A673 (cell line): ENCODE measurements at regions of chr7 and their contacts with region 1.

Region 1: DNA sequence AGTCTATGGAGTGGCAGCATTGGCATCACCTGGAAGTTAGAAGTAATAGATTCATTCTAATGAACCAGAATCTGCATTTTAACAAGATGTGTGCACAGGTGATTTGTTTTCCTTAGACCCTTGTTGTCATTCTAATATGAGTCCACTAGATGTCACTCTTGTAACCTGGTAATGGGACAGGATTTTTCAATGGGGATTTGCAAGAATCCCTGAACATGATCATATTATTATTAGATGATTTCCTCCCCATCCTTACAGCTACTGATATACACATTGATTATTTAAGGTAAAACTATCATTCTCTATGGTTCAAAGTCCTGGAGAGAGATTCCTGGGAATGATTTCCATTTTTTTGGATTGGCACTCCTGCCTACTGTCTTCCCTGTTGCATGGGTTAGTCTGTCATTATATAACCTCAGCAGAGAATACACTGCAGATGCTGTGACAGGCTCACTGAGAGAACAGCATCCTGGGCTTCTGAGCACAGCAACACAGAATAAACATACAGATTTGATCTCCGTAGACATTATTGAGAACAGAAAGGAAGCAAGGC is 194.9 kb downstream of the SUGCT start:
- DNase-seq: peak; percentile 58
- H3K4me3 ChIP-seq: no peak overlapping the region
- H3K27ac ChIP-seq: no peak overlapping the region
- H3K4me1 ChIP-seq: no peaks in the 10 kb centered on the region
- H3K27me3 ChIP-seq: no peaks in the 10 kb centered on the region
- CTCF ChIP-seq: peak; percentile 75

Region 2: DNA sequence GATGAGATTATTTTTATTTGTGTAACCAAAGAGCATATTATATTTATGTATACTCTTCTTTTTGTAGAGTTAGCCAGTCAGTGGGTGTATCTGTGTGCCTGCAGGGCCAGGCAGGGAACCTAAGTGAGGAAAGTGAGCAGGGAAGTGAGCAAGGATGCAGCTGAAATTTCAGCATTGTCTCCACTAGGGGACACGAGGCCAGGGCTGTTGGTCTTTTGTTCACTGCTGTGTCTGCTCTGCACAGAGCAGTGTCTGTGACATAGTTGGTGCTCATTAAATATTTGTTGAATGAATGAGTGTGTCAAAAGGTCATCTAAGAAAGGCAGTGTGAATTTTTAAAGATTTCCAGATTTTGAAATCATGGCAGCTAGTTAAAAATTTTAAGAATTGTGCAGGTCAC is 143.1 kb before region 1 on chr7:
- CTCF ChIA-PET with region 1: no interaction called
- POLR2A ChIA-PET with region 1: no interaction called
- intact Hi-C with region 1: no loop called
- DNase-seq: no peak
- H3K4me3 ChIP-seq: no peak overlapping the region
- H3K27ac ChIP-seq: no peak overlapping the region
- H3K4me1 ChIP-seq: no peaks in the 10 kb centered on the region
- H3K27me3 ChIP-seq: no peaks in the 10 kb centered on the region
- CTCF ChIP-seq: 0 out of 2 replicates have a peak, but pooled peaks have one; percentile 18

Region 3: DNA sequence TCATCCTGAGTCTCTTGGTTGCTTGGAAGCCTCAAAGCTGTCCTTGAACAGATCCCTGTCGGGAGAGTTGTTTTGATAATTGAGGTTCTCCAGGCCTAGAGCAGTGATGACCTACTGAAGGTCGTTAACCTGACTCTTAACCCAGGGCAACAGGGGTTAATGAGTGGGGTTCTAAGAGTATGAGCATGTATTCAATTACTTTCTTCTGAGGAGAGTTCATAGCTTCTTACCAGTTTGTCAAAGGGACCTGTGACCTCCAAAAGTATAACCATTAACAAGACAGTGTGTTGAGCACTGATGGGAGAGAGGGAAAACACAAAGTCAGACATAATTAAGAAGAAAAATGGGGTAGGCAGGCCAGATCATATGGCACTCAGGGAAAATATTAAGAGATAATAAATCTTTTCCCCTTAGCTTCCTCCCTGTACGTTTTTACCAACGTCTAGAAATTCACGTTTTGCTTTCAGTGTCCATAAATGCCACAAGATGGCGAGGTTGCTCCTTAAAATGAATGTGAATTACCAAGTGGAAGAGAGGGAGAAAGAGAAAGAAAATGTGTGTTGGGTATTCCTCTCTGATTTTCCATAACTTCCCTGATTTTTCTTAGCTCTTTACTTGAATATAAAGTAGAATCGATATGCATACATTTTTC is 97.3 kb before region 1 on chr7:
- CTCF ChIA-PET with region 1: no interaction called
- POLR2A ChIA-PET with region 1: no interaction called
- intact Hi-C with region 1: loop called (anchors 5 kb)
- DNase-seq: peak; percentile 70
- H3K4me3 ChIP-seq: no peak overlapping the region
- H3K27ac ChIP-seq: no peak overlapping the region
- H3K4me1 ChIP-seq: no peaks in the 10 kb centered on the region
- H3K27me3 ChIP-seq: no peaks in the 10 kb centered on the region
- CTCF ChIP-seq: peak; percentile 65

Region 4: GRCh38 chr7:40283391-40283790 is 46.3 kb before region 1 on chr7:
- CTCF ChIA-PET with region 1: no interaction called
- POLR2A ChIA-PET with region 1: no interaction called
- intact Hi-C with region 1: no loop called
- DNase-seq: no peak
- H3K4me3 ChIP-seq: no peak overlapping the region
- H3K27ac ChIP-seq: no peak overlapping the region
- H3K4me1 ChIP-seq: no peaks in the 10 kb centered on the region
- H3K27me3 ChIP-seq: no peaks in the 10 kb centered on the region
- CTCF ChIP-seq: no peak

Region 5: DNA sequence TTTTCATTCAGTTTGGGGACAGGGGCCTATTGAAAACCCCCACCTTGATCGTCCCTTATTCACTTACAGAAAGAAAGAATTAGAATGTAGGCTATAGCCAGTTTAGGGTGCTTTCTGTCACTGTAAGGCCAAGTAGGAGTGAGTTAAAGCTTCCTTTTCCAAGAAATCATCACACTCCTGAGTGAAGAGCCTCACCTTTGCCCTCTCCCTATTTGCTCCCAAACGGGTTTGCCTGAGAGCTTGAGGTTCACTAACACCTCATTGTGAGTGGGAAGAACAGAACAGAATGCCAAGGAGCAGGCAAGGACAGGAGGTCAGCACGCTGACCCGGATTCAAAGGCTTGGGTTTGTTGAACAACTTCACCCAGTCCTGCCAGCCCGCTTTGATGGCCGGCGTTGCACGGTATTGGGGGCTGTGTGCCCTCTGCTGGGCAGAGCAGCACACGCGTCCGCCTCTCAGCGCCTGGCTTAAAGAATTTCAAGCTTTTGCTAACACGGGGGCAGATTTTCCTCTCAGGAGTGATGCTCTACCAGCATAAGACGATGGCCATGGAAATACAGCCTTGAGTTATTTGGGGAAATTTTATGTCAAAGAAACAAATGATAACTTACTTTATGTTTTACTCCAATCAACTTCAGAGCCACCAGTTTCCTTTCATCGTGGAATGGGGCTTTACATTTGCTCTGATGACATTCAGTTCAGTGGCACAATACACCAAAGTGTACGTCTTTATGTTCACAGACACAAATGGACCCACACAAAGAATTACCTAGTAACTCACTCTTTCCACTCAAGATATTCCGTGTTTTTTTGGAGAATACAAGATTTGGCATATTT is 275.1 kb after region 1 on chr7:
- CTCF ChIA-PET with region 1: interaction called, 3 read pairs
- POLR2A ChIA-PET with region 1: no interaction called
- intact Hi-C with region 1: loop called (anchors 2 kb)
- DNase-seq: peak; percentile 55
- H3K4me3 ChIP-seq: no peak overlapping the region
- H3K27ac ChIP-seq: no peak overlapping the region
- H3K4me1 ChIP-seq: no peaks in the 10 kb centered on the region
- H3K27me3 ChIP-seq: no peaks in the 10 kb centered on the region
- CTCF ChIP-seq: peak; percentile 83

Region 6: DNA sequence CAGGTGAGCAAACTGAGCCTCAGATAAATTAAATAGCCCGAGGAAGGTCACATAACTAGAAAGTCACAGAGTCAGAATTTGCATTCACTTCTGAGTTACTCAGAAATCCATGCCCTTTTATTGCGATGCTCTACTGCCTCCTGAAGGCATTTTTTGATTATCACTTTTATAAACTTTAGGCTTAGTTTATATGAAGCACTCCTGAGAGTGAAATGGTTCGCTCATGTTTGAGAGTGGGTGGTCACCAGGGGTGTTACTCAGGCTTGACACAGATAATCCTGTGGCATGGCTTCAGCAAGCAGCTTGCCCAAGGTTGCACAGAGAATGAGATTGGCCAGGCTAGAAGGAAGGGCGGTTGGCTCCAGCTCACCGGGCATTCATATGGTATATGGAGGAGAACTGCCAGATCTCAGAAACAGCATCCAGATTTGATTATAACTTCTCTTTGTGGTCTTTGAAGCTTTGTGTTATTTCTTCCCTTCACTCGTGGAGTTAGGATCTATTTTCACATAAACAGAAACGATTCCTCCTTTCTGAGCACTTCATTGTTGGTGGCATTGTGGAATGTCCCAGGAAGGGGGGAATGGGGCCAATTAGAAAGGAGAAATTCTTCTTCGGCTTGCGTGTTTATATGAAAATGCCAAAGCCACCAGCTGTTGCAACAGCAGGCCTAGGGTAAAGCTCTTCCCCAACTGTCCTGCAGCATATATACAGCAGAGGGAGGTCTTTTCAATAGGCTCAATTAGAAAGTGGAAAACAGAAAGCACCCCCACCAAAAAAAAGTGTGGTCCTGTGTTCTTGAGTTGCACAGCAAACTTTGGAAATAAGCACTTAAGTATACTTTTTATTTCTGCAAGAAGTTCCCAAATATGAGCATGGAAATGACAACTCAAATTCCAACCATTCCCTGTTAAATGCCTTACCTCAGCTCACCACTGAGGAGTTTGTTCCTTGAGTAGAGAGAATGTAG is 433.9 kb after region 1 on chr7:
- CTCF ChIA-PET with region 1: no interaction called
- POLR2A ChIA-PET with region 1: no interaction called
- intact Hi-C with region 1: loop called (anchors 2 kb)
- DNase-seq: peak; percentile 11
- H3K4me3 ChIP-seq: no peak overlapping the region
- H3K27ac ChIP-seq: no peak overlapping the region
- H3K4me1 ChIP-seq: no peaks in the 10 kb centered on the region
- H3K27me3 ChIP-seq: no peaks in the 10 kb centered on the region
- CTCF ChIP-seq: 0 out of 2 replicates have a peak, but pooled peaks have one; percentile 11

Region 7: DNA sequence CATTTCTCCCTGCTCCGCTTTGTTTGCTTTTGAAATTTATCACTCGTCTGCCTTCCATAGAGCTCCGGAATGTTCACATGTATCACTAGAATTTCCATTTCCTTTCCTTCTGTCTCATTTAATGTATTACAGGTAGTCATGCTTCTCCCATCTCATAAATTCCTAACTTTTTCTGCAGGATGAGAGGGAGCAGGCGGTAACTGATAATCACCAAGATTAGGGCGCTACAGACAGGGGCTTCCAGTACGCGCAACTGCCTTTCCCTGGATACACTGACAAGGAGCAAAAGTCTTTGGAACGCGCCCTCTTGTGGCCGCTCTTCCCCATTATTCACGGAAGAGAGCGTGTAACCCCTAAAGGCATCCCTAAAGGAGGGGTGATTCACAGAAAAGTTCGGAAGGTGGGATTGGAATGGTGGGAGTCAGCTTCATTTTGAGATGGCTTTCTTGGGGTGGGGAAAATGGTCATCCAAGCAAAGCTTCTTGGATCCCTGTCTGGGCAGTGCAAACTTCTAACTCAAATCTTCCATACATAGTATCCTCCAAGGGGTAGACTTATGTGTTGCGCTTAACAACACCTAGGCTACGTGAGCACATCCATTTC is 1366.7 kb after region 1 on chr7:
- CTCF ChIA-PET with region 1: no interaction called
- POLR2A ChIA-PET with region 1: no interaction called
- intact Hi-C with region 1: loop called (anchors 2 kb)
- DNase-seq: peak; percentile 85
- H3K4me3 ChIP-seq: peak overlapping the region; percentile 18
- H3K27ac ChIP-seq: no peak overlapping the region
- H3K4me1 ChIP-seq: peaks cover 18% of the 10 kb centered on the region
- H3K27me3 ChIP-seq: peaks cover 3% of the 10 kb centered on the region
- CTCF ChIP-seq: peak; percentile 91